Activated naive CD8-positive, alpha-beta T cell treated with anti-CD3 and anti-CD28 coated beads, Interleukin-2, amount 10 ng/mL, durations not matched to agents 7 days and 5 days (primary cell): ENCODE measurements at regions of chr11 and their contacts with region 1.

Region 1: DNA sequence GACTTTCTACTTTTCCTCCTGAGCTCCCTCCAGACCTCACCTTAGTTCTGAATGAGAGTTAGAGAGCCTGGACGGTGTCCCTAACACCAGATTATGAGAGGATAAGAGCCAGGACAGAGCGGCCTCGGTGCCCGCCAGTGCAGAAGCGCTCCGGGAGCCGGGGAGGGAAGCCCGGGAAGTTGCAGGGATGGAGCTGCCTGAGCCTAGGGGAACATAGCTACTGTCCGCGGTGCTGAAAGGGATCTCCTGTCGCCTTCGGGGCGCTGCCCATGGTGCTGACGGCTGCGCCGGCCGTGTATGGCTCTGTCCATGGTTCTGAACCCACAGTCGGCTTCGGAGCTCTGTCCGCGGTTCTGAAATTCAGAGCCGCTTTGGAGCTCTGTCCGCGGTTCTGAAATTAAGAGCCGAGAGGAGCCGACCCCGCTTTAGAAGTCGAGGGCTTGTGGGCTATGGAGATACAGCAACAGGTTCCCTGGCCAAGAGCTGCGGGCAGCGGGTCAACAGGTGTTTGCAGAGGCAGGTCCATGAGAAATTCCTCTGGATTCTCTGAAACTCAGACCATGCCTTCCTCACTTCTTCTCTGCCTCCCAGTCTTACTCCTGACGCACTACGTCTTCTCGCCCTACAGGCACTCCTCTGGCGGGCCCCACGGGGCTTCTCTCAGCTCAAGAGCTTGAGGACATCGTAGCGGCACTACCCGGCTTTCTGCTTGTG is 814 bp downstream of the NPAS4 start:
- DNase-seq: peak; percentile 95
- ATAC-seq: peak; percentile 65
- H3K4me3 Mint-ChIP-seq: no peak overlapping the region
- H3K27ac Mint-ChIP-seq: no peak overlapping the region
- H3K4me1 Mint-ChIP-seq: peaks cover 12% of the 10 kb centered on the region
- H3K27me3 Mint-ChIP-seq: peaks cover 30% of the 10 kb centered on the region

Region 2: DNA sequence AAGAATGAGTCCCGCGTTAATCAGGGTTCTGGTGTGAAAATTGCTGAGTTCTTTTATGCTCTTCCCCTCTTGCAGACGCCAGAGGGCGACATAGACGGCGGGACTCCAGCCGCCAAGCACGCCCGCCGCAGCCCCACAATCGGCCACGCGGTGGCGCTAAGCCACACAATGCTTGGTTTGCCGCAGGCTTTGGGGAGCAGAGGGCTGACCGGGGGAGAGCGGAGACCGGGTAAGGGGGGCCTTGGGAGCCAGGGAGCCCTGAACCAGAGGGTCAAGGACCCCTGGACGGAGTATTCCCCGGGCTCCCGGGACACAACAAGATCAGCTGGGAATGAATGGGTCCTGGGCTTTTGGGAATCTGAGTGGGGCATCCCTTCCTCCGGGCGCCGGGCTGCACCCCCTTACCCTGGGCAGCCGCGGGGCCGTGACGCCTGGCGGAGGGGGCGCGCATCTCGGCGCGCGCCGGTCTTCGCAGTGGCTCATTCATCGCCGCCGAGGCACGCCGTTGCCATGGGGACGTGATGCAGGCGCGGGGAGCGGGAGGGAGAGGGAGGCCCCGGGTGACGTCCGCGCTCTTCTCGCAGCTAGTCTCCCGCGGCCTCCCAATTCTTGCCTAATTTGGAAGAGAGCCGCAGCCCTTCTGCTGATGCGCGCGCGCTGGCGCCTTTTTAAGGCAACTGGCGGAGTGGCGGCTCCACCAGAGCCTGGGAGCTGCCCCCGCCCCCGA is 13.0 kb before region 1 on chr11:
- POLR2A ChIA-PET with region 1: interaction called, 10 read pairs
- DNase-seq: peak; percentile 97
- ATAC-seq: peak; percentile 85
- H3K4me3 Mint-ChIP-seq: peak overlapping the region; percentile 83
- H3K27ac Mint-ChIP-seq: peak overlapping the region; percentile 57
- H3K4me1 Mint-ChIP-seq: peaks cover 3% of the 10 kb centered on the region
- H3K27me3 Mint-ChIP-seq: peaks cover 13% of the 10 kb centered on the region

Region 3: DNA sequence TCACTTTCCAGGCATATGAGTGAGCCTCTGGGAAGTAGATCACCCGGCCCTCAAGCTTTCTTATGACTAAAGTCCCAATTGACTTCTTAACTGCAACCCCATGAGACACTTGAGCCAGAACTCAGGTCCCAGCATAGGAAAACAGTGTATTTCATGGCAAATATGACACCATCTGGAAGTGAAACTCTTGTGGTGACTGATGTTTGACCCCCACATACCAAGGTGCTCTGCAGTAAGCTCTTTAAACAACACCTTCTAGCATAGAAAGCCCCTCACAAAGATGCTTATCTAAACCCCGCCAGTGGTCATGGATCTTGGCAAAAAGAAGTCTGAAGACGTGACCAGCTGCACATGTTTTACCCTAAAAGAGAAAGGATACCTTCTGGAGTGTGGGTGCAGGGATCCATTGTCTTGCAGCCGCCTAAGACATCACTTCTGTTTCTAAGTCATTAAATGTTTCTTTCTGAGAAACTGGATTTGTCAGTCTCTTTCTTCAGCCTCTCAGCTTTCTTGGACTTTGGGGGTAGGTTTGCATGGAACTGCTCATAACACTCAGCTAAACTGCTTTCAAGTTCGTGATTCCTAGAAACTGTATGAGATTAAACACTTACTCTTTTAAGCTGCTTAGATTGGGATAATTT is 37.6 kb after region 1 on chr11:
- POLR2A ChIA-PET with region 1: no interaction called
- DNase-seq: no peak
- ATAC-seq: no peak
- H3K4me3 Mint-ChIP-seq: no peak overlapping the region
- H3K27ac Mint-ChIP-seq: peak overlapping the region; percentile 58
- H3K4me1 Mint-ChIP-seq: peaks cover 30% of the 10 kb centered on the region
- H3K27me3 Mint-ChIP-seq: no peaks in the 10 kb centered on the region

Region 4: GRCh38 chr11:66510271-66510989 is 88.8 kb after region 1 on chr11 and contains the start of gene BBS1:
- POLR2A ChIA-PET with region 1: no interaction called
- DNase-seq: peak; percentile 86
- ATAC-seq: peak; percentile 93
- H3K4me3 Mint-ChIP-seq: peak within 1 kb of the TSS; percentile 90
- H3K27ac Mint-ChIP-seq: peak within 1 kb of the TSS; percentile 42
- H3K4me1 Mint-ChIP-seq: peaks cover 14% of the 10 kb centered on the region
- H3K27me3 Mint-ChIP-seq: no peaks in the 10 kb centered on the region
- total RNA-seq, gene BBS1: 22.6 to 26.4 TPM